ENCODE measurements at regions of chr7 and their contacts with region 1.

Region 1: DNA sequence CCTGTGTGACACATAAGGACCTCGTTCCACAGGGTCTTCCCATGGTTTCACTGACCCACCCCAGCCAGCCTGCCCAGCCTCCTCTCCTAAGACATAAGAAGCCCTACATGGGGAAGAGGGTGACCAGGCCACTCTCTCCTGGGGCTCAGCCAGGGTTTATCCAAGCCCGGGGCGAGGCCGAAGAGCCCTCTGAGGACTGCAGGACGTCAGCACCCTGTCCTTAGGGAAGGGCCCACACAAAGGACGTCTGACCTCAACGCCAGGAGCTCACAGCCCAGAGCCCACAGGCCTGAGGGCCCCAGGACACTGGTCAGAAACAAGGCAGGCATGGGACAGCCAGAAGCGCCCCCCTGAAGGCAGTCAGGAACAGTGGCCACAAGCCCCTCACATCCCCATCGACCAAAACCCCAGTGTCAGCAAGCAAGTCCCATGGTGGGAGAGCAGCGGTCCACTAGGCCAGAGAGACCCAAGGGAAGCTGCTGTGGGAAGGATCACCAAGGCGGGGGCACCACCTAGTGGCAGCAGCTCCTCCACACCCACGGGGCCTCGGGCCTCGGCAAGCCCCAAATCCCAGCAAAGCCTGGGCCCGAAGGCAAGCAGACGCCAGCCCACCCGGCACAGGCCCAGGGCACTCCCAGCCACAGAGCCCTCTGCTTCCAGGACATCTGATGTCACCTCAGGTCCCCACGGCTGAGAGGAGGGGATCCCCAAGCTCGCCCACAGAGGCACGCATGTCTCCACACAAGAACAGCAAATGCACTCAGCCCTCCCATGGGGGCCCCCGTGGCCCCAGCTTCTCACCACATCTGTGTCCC is 23.4 kb downstream of the MAD1L1 start:
- DNase-seq: no peak
- H3K4me3 ChIP-seq: no peak overlapping the region
- CTCF ChIP-seq: peak; percentile 99

Region 2: DNA sequence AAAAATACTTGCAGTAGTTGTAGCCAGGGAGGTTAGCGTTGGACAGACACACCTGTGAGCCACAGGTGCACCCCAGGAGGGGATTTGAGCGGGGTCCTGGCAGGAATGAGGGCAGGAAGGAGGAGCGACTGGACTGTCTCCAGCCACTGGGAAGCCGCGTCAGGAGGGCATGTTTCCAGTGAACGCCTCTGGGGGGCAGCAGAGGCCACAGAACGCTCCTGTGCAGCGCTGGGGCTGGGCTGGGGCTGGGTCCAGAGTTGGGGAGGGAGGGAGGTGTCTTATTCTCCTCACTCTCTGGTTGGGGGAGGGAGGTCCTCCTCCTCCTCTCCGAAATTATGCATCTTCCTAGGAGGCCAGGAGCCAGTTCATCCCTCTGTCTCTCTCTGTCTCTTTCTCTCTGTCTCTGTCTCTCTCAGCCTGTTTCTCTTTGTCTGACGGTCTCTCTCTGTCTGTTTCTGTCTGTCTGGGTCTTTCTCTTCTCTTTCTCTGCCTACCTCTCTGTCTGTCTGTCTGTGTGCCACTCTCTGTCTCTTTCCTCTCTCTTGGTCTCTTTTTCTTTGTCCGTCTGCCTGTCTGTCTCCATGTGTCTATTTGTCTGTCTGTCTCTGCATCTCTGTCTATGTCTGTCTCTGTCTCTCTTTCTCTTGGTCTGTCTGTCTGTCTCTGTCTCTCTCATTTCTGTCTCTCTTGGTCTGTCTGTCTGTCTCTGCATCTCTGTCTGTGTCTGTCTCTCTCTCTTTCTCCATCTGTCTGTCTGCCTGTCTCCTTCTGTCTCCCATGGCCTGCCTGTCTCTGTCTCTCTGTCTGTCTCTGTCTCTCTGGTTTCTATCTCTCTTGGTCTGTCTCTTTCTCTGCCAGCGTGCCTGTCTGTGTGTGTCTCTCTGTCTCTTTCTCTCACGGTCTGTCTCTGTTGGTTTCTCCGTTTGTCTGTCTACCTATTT is 629.6 kb before region 1 on chr7:
- CTCF ChIA-PET with region 1: interaction called, 19 read pairs
- POLR2A ChIA-PET with region 1: no interaction called
- DNase-seq: no peak
- H3K4me3 ChIP-seq: no peak overlapping the region
- CTCF ChIP-seq: peak; percentile 92

Region 3: GRCh38 chr7:1664711-1665548 is 544.4 kb before region 1 on chr7:
- CTCF ChIA-PET with region 1: interaction called, 12 read pairs
- POLR2A ChIA-PET with region 1: no interaction called
- DNase-seq: no peak
- H3K4me3 ChIP-seq: peak overlapping the region; percentile 69
- CTCF ChIP-seq: peak; percentile 88

Region 4: DNA sequence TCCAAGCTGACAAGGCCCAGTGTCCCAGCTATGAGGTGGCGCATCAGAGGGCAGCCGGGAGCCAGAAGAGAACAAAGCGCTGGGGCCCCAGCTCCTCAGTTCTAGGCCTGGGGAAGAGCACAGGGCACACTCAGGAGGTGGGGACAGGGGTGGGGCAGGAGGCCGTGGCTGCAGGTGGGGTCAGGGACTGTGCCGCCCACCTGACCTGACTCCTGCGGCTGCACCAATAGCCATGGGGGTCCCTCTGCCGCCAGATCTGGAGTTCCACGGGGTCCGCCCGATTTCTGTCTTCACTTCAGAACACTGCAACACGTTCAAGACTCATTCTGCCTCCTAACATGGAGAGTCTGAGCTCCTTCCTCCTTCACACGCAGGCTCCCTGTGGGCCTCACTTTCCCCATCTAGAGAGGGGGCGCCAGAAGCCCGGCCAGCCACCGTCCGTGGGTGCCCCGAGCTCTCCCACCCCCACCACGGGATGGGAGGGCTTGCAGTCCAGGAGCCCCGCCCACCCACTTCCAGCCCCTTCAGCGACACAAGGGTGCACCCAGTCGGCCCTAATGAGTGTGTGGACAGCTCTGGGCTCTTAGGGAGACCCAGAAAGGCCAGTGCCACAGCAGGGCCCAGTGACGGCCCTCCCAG is 254.9 kb before region 1 on chr7:
- CTCF ChIA-PET with region 1: interaction called, 10 read pairs
- POLR2A ChIA-PET with region 1: no interaction called
- DNase-seq: no peak
- H3K4me3 ChIP-seq: no peak overlapping the region
- CTCF ChIP-seq: peak; percentile 16

Region 5: DNA sequence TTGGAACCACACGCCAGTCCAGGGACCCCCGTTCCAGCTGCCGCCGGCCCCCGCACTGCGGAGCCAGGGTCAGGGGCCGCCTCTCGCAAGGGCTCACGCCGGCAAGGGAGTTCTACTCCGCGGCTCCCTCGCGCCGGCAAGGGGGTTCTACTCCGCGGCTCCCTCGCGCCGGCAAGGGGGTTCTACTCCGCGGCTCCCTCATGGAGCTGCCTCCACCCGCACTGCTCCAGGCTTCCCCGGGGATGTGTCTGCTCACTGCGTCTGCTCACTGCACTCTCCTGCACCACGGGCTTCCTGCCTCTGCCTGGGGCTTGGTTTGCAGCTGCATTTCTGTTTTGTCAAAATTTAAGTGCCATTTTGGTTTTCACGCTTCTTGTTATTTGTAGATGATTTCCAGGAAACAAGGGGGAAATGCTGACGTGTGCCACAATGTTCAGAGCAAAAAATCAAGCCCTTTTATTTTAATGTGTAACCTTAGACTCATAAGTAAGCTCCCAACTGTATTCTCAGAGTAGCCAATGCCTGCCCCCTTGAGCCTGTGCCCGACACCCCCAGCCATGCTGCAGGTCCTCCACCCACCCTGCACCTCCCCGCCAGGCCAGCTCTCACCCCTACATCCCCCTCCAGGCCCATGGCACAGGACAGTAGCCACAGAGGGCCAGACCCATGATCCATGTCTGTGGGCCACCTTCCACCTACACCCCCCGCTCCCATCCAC is 222.8 kb before region 1 on chr7:
- CTCF ChIA-PET with region 1: no interaction called
- POLR2A ChIA-PET with region 1: no interaction called
- DNase-seq: no peak
- H3K4me3 ChIP-seq: no peak overlapping the region
- CTCF ChIP-seq: no peak

Region 6: DNA sequence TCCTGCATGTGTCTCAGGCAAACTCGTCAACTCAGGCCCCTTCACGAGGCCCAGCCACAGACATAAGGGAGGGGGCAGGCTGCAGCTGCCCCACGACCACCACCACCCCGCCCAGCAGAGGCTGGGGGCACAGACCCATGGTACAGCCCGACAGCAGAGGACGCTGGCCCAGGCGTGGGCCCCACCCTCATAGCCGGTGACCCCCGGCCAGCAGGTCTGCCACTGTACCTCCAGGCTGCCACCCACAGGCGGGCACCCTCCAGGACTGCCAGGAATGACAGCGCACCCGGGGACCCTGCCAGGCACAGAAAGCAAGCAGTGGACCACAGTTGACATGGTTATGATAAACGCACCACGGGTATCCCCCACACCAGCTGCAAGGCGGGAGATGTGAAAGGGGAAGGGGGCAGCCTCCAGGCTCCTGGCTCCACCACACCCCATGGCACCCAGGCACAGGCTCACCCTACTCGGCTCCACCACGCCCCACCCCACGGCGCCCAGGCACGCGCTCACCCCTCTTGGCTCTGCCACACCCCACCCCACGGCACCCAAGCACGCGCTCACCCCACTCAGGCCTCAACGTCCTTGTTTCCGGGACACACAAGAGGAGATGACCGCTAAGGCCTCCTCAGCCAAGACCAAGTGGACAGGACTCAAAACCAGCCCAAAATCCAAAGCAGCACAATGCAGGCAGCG is 112.5 kb before region 1 on chr7:
- CTCF ChIA-PET with region 1: no interaction called
- POLR2A ChIA-PET with region 1: no interaction called
- DNase-seq: no peak
- H3K4me3 ChIP-seq: no peak overlapping the region
- CTCF ChIP-seq: no peak

Region 7: GRCh38 chr7:2185715-2186114 is 23.6 kb before region 1 on chr7:
- CTCF ChIA-PET with region 1: interaction called, 10 read pairs
- POLR2A ChIA-PET with region 1: no interaction called
- DNase-seq: no peak
- H3K4me3 ChIP-seq: no peak overlapping the region
- CTCF ChIP-seq: no peak

Region 8: DNA sequence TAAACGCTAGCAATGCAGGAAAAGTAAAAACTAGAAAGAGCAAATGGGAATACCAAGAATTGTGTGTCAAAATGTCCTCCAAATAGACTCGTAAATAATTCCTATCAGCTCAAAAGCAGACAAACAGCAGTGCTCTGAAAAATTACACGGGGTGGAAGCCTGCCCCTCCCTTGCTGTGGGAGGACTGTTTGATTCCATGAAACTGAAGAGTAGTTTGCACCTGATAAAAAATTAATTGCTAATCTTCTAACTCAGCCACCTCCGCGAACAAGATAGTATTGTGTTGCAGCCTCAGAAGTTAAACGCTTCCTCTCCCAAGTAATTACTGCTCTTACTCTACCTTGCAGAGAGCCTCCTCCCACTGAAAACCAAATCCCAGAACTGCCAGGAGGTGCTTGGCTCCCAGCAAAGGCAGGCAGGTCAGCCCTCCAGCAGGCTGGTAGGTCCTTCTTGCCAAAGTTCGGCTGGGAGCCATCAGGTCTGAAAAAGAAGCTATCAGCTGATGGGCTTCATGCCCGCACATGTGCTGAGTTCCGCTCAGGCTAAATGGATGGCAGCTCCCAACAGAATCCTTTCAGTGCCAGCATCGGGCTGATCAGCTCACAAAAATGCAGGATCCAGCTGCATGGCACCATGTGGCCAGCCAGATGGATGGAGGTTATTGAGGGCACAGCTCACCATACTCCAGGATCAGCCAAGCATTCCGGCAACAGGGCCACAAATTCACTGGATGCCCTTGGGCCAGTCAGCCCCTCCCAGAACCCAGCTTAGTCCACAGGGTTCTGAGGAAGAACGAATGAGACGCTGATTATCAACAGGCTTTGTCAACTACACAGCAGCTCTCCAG is 13.7 kb before region 1 on chr7:
- CTCF ChIA-PET with region 1: interaction called, 14 read pairs
- POLR2A ChIA-PET with region 1: no interaction called
- DNase-seq: no peak
- H3K4me3 ChIP-seq: no peak overlapping the region
- CTCF ChIP-seq: no peak

Region 9: DNA sequence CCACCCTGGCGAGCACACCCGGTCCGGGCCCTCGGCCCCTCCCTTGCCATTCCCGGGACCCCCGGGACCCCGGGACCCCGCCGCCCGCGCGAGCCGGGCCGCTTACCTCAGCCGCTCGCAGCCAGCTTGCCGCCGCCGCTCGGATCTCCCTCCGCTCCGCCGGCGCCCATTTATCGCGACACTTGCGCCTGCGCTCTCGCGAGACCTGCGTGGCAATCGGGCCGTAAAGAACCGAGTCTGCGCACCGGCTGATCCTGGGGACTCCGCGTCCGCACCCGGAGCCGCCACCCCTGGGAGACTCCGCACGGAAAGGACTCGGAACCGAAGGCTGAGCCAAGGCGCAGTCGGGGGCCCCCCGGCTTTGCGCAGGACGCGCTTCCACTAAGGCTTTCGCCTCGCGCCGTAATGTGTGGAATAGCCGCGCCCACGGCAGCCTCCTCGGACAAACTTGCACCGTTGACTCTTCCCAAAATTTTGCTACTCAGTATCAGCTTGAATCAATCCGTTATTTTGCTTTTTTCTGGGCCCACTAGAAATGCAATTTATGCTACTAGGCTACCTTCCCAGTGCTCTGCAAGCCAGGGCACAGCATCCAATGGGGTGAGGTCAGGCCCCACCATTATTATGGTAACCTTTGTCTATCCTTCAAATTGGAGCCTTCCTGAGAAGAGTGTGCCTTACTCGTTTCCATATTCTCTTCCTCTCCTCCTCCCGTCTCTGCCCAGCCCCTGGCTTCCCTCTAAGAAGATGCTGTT is 23.6 kb after region 1 on chr7 and contains the start of gene MAD1L1:
- CTCF ChIA-PET with region 1: interaction called, 11 read pairs
- POLR2A ChIA-PET with region 1: no interaction called
- DNase-seq: peak; percentile 21
- H3K4me3 ChIP-seq: peak within 1 kb of the TSS; percentile 79
- CTCF ChIP-seq: no peak

Measured in AG04449 (cell line).